Left cardiac atrium (tissue), 4 donors: ENCODE measurements at regions of chr1 and their contacts with region 1.

Region 1: DNA sequence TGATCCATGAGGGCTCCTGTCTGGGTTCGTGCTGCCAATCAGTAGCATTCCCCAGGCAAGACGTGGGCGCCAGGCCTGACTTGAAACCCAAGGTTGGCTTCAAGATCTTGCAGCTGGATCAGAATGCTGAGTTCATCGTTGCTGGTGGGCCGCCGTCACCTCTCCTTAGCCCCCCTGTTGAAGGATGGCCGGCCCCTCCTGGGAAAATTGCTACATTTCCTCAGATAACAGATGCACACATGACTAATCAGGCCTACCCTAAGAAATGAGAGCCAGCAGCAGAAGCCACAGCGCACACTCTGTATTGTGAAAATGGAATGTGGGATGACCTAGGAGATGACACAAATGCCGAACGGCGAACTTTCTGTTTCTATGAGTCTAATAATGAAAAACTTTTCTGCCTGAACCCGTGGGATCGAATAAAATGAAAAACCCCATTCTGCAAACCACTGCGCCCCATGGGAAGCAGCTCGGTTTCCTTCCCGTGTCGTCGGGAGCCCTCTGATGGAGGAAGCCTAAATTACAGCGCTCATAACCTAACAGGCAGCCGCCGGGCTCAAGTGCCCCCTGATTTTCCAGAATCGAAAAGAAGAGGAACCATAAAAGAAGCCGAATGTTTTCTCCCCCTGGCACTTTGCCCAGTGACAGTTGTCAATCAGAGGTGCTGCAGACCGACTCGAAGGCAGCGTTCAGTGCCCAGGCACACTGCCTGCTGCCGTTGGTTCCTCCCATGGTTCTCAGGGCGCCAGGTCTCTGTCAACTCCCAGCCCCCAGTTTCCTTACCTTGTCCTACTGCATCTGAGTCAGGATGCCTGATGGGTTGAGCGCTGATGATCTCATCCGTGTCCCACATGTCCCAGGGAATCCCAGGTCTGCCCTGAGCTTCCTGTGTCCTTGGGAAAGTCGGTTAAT is 38.2 kb upstream of the H6PD start:
- DNase-seq: peak; percentile 80
- ATAC-seq: peak; percentile 58 to 68

Region 2: GRCh38 chr1:9101510-9102146 is 94.8 kb before region 1 on chr1:
- intact Hi-C with region 1: loop called in 1 of 2 experiments (anchors 10 kb)
- DNase-seq: no peak
- ATAC-seq: peak; percentile 66 to 68

Region 3: GRCh38 chr1:9110669-9111356 is 85.6 kb before region 1 on chr1:
- intact Hi-C with region 1: loop called (anchors 2 to 10 kb)
- DNase-seq: peak; percentile 90
- ATAC-seq: peak; percentile 87 to 93

Region 4: GRCh38 chr1:9145021-9145668 is 51.2 kb before region 1 on chr1:
- intact Hi-C with region 1: loop called (anchors 5 to 10 kb)
- DNase-seq: no peak
- ATAC-seq: no peak

Region 5: GRCh38 chr1:9166289-9167235 is 29.8 kb before region 1 on chr1:
- intact Hi-C with region 1: no loop called
- DNase-seq: no peak
- ATAC-seq: no peak

Region 6: GRCh38 chr1:9317591-9318417 is 121.4 kb after region 1 on chr1:
- intact Hi-C with region 1: no loop called
- DNase-seq: peak; percentile 59
- ATAC-seq: peak; percentile 8 to 27

Region 7: GRCh38 chr1:9425859-9426258 is 229.5 kb after region 1 on chr1:
- intact Hi-C with region 1: no loop called
- DNase-seq: no peak
- ATAC-seq: no peak